Colonic mucosa (tissue), 4 donors: ENCODE measurements at regions of chr4 and their contacts with region 1.

Region 1: GRCh38 chr4:145557720-145558119 is 61.5 kb upstream of the MMAA start:
- DNase-seq: peak; percentile 51
- H3K4me3 ChIP-seq: no peak overlapping the region
- H3K27ac ChIP-seq: no peak overlapping the region
- H3K4me1 ChIP-seq: no peaks in the 10 kb centered on the region
- H3K27me3 ChIP-seq: no peaks in the 10 kb centered on the region
- CTCF ChIP-seq: peak; percentile 79

Region 2: GRCh38 chr4:145154573-145154972 is 403.1 kb before region 1 on chr4:
- intact Hi-C with region 1: loop called (anchors 10 kb)
- DNase-seq: no peak
- H3K4me3 ChIP-seq: no peak overlapping the region
- H3K27ac ChIP-seq: no peak overlapping the region
- H3K4me1 ChIP-seq: no peaks in the 10 kb centered on the region
- H3K27me3 ChIP-seq: no peaks in the 10 kb centered on the region
- CTCF ChIP-seq: no peak

Region 3: GRCh38 chr4:145234091-145234706 is 323.5 kb before region 1 on chr4:
- intact Hi-C with region 1: loop called (anchors 5 kb)
- DNase-seq: peak; percentile 65
- H3K4me3 ChIP-seq: no peak overlapping the region
- H3K27ac ChIP-seq: no peak overlapping the region
- H3K4me1 ChIP-seq: no peaks in the 10 kb centered on the region
- H3K27me3 ChIP-seq: no peaks in the 10 kb centered on the region
- CTCF ChIP-seq: peak; percentile 64